Activated CD4-positive, alpha-beta T cell treated with anti-CD3 and anti-CD28 coated beads, Interleukin-2, amount 10 ng/mL, durations not matched to agents 24 days and 14 days (primary cell): ENCODE measurements at regions of chr7 and their contacts with region 1.

Region 1: DNA sequence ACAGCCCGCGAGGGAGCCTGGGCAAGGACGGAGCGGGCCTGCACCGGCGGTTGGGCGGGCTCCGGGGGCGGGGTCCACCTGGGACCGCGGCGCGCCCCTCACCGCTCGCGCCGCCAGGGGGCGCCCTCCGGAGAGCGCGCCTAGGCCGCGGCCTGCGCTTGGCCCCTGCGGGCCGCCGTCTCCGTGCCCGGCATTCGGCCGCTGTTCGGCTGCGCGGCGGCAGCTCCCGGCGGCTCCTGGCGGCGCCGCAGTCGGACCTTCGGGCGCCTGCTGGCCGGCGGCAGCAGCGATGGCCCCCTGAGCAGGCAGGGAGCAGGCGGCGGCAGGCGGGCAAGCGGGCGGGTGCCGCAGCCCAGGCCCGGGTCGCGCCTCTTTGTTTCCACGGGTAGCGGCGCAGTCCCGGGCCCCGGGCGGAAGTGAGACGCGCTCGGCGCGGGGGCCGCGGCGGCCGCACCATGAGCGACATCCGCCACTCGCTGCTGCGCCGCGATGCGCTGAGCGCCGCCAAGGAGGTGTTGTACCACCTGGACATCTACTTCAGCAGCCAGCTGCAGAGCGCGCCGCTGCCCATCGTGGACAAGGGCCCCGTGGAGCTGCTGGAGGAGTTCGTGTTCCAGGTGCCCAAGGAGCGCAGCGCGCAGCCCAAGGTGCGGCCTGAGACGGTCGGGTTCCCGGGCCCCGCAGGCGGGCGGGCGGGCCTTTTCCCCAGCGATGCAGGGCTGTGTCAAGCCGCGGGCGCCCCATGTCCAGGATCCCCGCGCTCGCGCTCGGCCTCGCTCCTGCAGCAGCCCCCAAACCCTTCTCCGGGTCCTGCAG is at the start of gene INTS15:
- DNase-seq: peak; percentile 96
- H3K4me3 Mint-ChIP-seq: peak within 1 kb of the TSS; percentile 98
- H3K27ac Mint-ChIP-seq: peak within 1 kb of the TSS; percentile 94
- H3K4me1 Mint-ChIP-seq: peaks cover 19% of the 10 kb centered on the region
- H3K27me3 Mint-ChIP-seq: no peaks in the 10 kb centered on the region
- total RNA-seq, gene INTS15: 42.5 and 45.1 TPM in 2 replicates

Region 2: DNA sequence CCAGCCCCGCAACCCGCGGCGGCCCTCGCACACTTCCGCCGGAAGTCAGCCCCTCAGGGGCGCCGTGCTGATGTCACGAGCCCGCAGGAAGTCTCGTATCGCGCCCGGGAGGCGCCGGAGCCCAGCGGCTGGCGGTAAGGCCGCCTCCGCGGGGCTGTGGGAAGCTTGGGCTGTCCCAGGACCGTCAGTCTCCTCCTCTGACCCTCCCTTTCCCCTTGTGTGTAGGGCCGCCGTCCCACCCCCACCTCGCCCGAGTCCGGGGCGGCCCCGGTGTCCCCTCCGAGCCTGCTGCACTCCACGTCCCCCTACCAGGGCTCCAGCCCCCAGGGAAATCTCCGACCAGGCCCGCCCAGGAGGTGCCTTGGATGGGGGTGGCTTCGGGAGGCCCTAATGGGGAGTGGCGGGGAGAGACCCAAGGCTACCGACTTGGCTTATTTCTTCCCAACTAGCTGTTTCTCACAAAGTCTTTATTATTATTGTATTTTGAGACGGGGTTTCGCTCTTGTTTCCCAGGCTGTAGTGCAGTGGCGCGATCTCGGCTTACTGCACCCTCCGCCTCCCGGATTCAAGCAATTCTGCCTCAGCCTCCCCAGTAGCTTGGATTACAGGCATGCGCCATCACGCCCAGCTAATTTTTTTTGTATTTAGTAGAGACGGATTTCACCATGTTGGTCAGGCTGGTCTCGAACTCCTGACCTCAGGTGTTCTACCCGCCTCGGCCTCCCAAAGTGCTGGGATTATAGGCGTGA is 12.5 kb before region 1 on chr7 and contains the start of gene ZDHHC4:
- intact Hi-C with region 1: loop called (anchors 1 kb)
- DNase-seq: peak; percentile 96
- H3K4me3 Mint-ChIP-seq: peak within 1 kb of the TSS; percentile 84
- H3K27ac Mint-ChIP-seq: peak within 1 kb of the TSS; percentile 90
- H3K4me1 Mint-ChIP-seq: peaks cover 18% of the 10 kb centered on the region
- H3K27me3 Mint-ChIP-seq: peaks cover 3% of the 10 kb centered on the region
- total RNA-seq, gene ZDHHC4: 26.7 and 28.3 TPM in 2 replicates

Region 3: GRCh38 chr7:6706677-6707544 is 116.9 kb after region 1 on chr7 and contains the start of gene ZNF12:
- intact Hi-C with region 1: loop called (anchors 2 kb)
- DNase-seq: peak; percentile 98
- H3K4me3 Mint-ChIP-seq: peak within 1 kb of the TSS; percentile 96
- H3K27ac Mint-ChIP-seq: peak within 1 kb of the TSS; percentile 91
- H3K4me1 Mint-ChIP-seq: peaks cover 31% of the 10 kb centered on the region
- H3K27me3 Mint-ChIP-seq: no peaks in the 10 kb centered on the region
- total RNA-seq, gene ZNF12: 17.9 and 22.8 TPM in 2 replicates